ENCODE measurements at regions of chr19 and their contacts with region 1.

Region 1: DNA sequence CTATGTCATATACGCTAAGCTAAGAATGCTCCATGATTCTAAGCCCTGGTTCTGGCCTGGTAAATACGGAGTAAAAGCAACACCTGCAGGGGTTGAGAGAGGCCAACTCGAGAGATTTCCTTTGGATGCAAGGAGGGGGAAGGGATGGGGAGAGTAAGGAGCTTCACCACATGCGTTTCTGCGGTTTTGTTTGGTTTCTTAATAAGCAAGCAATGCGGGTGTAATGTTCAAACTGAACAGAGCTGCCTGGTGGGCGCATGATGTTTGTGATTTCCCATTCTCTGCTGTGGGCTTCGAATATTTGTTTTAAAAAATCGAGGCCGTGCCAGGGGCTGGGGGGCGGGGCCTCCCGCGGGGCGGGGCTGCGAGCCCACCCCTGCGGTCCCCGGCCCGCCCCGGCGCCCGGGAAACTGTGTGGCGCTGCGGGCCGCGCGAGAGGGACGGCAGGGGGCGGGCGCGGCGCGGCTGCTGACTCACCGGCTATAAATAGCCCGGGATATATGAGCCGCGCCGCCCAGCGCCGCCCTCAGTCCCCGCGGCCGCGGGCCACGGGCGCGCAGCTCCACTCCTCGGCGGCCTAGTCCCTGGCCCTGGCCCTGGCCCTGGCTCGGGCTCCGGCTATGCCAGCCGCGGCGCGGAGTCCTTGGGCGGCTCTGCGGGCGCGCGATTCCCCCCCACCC is 5.1 kb downstream of the BBC3 start:
- DNase-seq: peak; percentile 72 to 94 (median 82)
- ATAC-seq: peak; percentile 76
- H3K4me3 ChIP-seq: peak overlapping the region; percentile 54
- H3K4me3 Mint-ChIP-seq: peak overlapping the region; percentile 31 to 84 (median 66)
- H3K27ac ChIP-seq: peak overlapping the region; percentile 81
- H3K27ac Mint-ChIP-seq: peak overlapping the region in 8 of 9 donors; percentile 26 to 96 (median 84)
- H3K4me1 ChIP-seq: peaks cover 28 to 31% of the 10 kb centered on the region in 2 donors
- H3K4me1 Mint-ChIP-seq: peaks cover 8 to 16% (median 11%) of the 10 kb centered on the region in 7 donors
- H3K27me3 ChIP-seq: no peaks in the 10 kb centered on the region
- H3K27me3 Mint-ChIP-seq: no peaks in the 10 kb centered on the region

Region 2: DNA sequence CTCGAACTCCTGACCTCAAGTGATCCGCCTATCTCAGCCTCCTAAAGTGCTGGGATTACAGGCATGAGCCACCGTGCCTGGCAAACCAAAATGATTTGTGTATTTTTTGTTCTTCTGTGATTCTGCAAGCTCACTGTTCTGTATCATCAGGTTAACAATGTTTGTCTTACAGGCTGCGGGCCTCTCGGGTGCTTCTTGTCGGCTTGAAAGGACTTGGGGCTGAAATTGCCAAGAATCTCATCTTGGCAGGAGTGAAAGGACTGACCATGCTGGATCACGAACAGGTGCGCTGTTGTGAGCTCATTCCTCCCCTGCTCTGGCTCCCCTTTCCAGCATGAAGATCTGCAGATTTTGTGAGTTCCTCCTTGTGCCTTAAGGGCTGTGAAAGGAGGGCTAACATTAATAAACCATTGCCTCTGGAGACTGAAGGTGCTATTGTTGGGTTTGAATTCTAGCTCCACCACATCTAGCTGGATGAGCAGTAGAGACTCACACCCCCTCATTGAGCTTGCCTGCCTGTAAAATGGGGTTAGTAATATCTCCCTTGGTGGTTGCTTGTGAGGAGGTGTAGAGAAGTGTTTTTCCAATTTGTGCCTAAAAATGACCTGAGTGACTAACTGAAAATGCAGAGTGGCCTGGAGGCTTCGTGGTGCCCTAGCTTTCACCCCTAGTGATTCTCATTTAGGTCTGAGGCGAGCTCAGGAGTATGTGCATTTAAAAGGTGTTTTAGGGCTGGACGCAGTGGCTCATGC is 82.4 kb before region 1 on chr19:
- CTCF ChIA-PET with region 1: interaction called, 4 read pairs
- POLR2A ChIA-PET with region 1: interaction called, 15 read pairs
- intact Hi-C with region 1: no loop called
- DNase-seq: no peak
- ATAC-seq: no peak
- H3K4me3 ChIP-seq: no peak overlapping the region
- H3K4me3 Mint-ChIP-seq: peak overlapping the region in 3 of 10 donors; percentile 9 to 45 (median 32)
- H3K27ac ChIP-seq: no peak overlapping the region
- H3K27ac Mint-ChIP-seq: peak overlapping the region in 4 of 9 donors; percentile 11 to 73 (median 42)
- H3K4me1 ChIP-seq: peaks cover 21 to 38% of the 10 kb centered on the region in 2 donors
- H3K4me1 Mint-ChIP-seq: peaks cover 29 to 75% (median 57%) of the 10 kb centered on the region in 7 donors
- H3K27me3 ChIP-seq: no peaks in the 10 kb centered on the region
- H3K27me3 Mint-ChIP-seq: no peaks in the 10 kb centered on the region

Region 3: DNA sequence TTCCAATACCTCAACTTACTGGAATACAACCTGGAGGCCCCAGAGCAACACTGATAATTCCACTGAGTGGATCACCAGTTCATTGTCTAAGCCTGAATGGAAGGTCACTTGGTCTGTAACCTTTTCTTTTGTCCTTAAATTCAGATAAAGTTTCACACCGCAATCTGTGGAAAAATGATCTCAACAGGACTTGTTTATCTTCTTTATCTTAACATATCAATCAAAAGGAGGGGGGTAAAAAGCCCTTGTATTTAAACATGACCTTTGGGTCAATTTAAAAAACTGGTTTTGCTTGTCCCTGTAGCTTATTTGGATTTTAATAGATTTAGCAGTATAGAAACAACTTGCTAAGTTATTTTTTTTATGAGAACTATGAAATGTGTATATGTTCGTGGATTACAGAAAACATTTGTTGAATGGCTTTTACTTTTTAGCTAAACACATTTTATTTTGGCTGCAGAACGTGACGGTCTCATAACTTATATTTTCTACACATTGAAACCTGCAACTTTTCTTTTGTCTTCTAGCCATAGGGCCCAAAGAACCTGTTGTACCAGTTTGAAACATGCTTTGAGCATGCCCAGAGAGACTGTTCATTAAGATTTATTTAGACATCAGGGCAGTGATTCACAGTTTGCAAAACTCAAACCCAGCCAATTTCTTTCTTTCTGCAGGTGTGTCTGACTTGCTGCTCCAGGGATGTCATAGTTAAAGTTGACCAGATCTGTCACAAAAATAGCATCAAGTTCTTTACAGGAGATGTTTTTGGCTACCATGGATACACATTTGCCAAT is 73.5 kb before region 1 on chr19:
- CTCF ChIA-PET with region 1: interaction called, 8 read pairs
- POLR2A ChIA-PET with region 1: interaction called, 16 read pairs
- intact Hi-C with region 1: loop called (anchors 1 to 5 kb)
- DNase-seq: no peak
- ATAC-seq: no peak
- H3K4me3 ChIP-seq: no peak overlapping the region
- H3K4me3 Mint-ChIP-seq: no peak overlapping the region
- H3K27ac ChIP-seq: no peak overlapping the region
- H3K27ac Mint-ChIP-seq: peak overlapping the region in 3 of 9 donors; percentile 60 to 88 (median 61)
- H3K4me1 ChIP-seq: peaks cover 24 to 53% of the 10 kb centered on the region in 2 donors
- H3K4me1 Mint-ChIP-seq: peaks cover 26 to 75% (median 61%) of the 10 kb centered on the region in 7 donors
- H3K27me3 ChIP-seq: no peaks in the 10 kb centered on the region
- H3K27me3 Mint-ChIP-seq: no peaks in the 10 kb centered on the region

Region 4: GRCh38 chr19:47157431-47158321 is 68.2 kb before region 1 on chr19:
- CTCF ChIA-PET with region 1: interaction called, 9 read pairs
- POLR2A ChIA-PET with region 1: interaction called, 16 read pairs
- intact Hi-C with region 1: loop called (anchors 1 to 5 kb)
- DNase-seq: peak in 7 of 9 donors; percentile 38 to 58 (median 48)
- ATAC-seq: peak; percentile 45
- H3K4me3 ChIP-seq: peak overlapping the region; percentile 55
- H3K4me3 Mint-ChIP-seq: peak overlapping the region; percentile 79 to 98 (median 84)
- H3K27ac ChIP-seq: peak overlapping the region; percentile 66
- H3K27ac Mint-ChIP-seq: peak overlapping the region; percentile 82 to 98 (median 97)
- H3K4me1 ChIP-seq: peaks cover 57 to 72% of the 10 kb centered on the region in 2 donors
- H3K4me1 Mint-ChIP-seq: peaks cover 35 to 82% (median 66%) of the 10 kb centered on the region in 7 donors
- H3K27me3 ChIP-seq: no peaks in the 10 kb centered on the region
- H3K27me3 Mint-ChIP-seq: no peaks in the 10 kb centered on the region

Region 5: DNA sequence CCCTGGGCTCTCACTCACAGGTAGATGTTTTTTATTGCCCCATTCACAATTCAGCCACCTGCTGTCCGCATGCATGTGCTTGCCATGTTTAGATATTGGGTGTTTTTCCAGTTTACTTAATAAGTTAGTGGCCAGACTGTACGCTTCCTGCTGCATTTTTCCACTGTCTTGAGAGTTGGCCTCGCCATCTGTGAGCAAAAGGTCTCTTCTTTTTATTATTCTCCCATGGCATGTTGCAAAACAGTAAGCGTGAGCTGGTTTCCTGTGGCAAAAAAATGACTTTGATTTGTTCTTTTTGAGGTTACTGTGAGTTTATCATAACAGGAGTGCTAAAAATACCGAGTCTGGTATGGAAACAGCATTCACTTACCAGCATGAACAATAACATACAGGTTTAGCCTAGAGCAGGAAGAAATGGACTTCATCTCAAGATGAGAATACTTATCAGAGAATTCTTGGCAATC is 49.2 kb before region 1 on chr19:
- CTCF ChIA-PET with region 1: interaction called, 10 read pairs
- POLR2A ChIA-PET with region 1: interaction called, 16 read pairs
- intact Hi-C with region 1: no loop called
- DNase-seq: peak in 8 of 9 donors; percentile 44 to 83 (median 79)
- ATAC-seq: peak; percentile 90
- H3K4me3 ChIP-seq: peak overlapping the region; percentile 28
- H3K4me3 Mint-ChIP-seq: peak overlapping the region; percentile 73 to 89 (median 81)
- H3K27ac ChIP-seq: peak overlapping the region; percentile 58
- H3K27ac Mint-ChIP-seq: peak overlapping the region; percentile 87 to 98 (median 96)
- H3K4me1 ChIP-seq: peaks cover 40 to 55% of the 10 kb centered on the region in 2 donors
- H3K4me1 Mint-ChIP-seq: peaks cover 40 to 85% (median 76%) of the 10 kb centered on the region in 7 donors
- H3K27me3 ChIP-seq: no peaks in the 10 kb centered on the region
- H3K27me3 Mint-ChIP-seq: no peaks in the 10 kb centered on the region

Region 6: GRCh38 chr19:47190167-47190727 is 35.6 kb before region 1 on chr19:
- CTCF ChIA-PET with region 1: interaction called, 10 read pairs
- POLR2A ChIA-PET with region 1: interaction called, 19 read pairs
- intact Hi-C with region 1: loop called (anchors 1 kb)
- DNase-seq: peak in 8 of 9 donors; percentile 52 to 77 (median 64)
- ATAC-seq: peak; percentile 53
- H3K4me3 ChIP-seq: no peak overlapping the region
- H3K4me3 Mint-ChIP-seq: peak overlapping the region; percentile 48 to 83 (median 72)
- H3K27ac ChIP-seq: peak overlapping the region; percentile 25
- H3K27ac Mint-ChIP-seq: peak overlapping the region; percentile 72 to 98 (median 95)
- H3K4me1 ChIP-seq: peaks cover 37 to 77% of the 10 kb centered on the region in 2 donors
- H3K4me1 Mint-ChIP-seq: peaks cover 41 to 81% (median 71%) of the 10 kb centered on the region in 7 donors
- H3K27me3 ChIP-seq: no peaks in the 10 kb centered on the region
- H3K27me3 Mint-ChIP-seq: no peaks in the 10 kb centered on the region

Region 7: GRCh38 chr19:47256688-47257443 is 31.0 kb after region 1 on chr19:
- CTCF ChIA-PET with region 1: no interaction called
- POLR2A ChIA-PET with region 1: interaction called, 7 read pairs
- intact Hi-C with region 1: loop called (anchors 1 kb)
- DNase-seq: peak; percentile 94 to 100 (median 96)
- ATAC-seq: peak; percentile 88
- H3K4me3 ChIP-seq: peak overlapping the region; percentile 65
- H3K4me3 Mint-ChIP-seq: peak overlapping the region; percentile 85 to 97 (median 90)
- H3K27ac ChIP-seq: peak overlapping the region; percentile 90
- H3K27ac Mint-ChIP-seq: peak overlapping the region; percentile 90 to 99 (median 97)
- H3K4me1 ChIP-seq: peaks cover 15 to 24% of the 10 kb centered on the region in 2 donors
- H3K4me1 Mint-ChIP-seq: peaks cover 35 to 46% (median 39%) of the 10 kb centered on the region in 7 donors
- H3K27me3 ChIP-seq: no peaks in the 10 kb centered on the region
- H3K27me3 Mint-ChIP-seq: peaks cover 0 to 2% (median 0%) of the 10 kb centered on the region in 5 donors

Region 8: GRCh38 chr19:47608074-47608918 is 382.4 kb after region 1 on chr19:
- CTCF ChIA-PET with region 1: no interaction called
- POLR2A ChIA-PET with region 1: no interaction called
- intact Hi-C with region 1: no loop called
- DNase-seq: peak; percentile 91 to 99 (median 96)
- ATAC-seq: peak; percentile 96
- H3K4me3 ChIP-seq: peak overlapping the region; percentile 79
- H3K4me3 Mint-ChIP-seq: peak overlapping the region; percentile 70 to 95 (median 86)
- H3K27ac ChIP-seq: peak overlapping the region; percentile 96
- H3K27ac Mint-ChIP-seq: peak overlapping the region; percentile 61 to 92 (median 88)
- H3K4me1 ChIP-seq: peaks cover 16 to 22% of the 10 kb centered on the region in 2 donors
- H3K4me1 Mint-ChIP-seq: peaks cover 12 to 36% (median 28%) of the 10 kb centered on the region in 7 donors
- H3K27me3 ChIP-seq: no peaks in the 10 kb centered on the region
- H3K27me3 Mint-ChIP-seq: peaks cover 0 to 2% (median 0%) of the 10 kb centered on the region in 5 donors

Measured in naive thymus-derived CD4-positive, alpha-beta T cell (primary cell).